Psoas muscle (tissue), 8 donors: ENCODE measurements at regions of chr10 and their contacts with region 1.

Region 1: DNA sequence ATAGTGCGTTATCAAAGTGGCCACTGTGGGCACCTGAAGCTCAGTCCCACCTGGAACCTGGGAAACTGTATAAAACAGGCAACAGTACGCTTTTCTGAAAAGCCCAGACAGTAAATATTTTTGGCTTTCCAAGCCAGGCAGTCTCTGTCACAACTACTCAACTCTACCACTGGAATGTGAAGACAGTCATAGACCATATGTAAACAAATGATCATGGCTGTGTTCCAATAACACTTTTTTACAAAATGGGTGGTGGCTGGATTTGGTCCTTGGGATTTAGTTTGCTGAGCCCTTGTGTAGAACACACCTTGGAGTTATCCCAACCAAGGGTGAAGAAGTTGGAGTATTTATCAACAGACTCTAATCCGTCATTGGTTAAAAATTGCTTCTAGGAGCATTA is 259.9 kb downstream of the SKIDA1 start:
- DNase-seq: no peak
- ATAC-seq: no peak
- H3K4me3 ChIP-seq: no peak overlapping the region
- H3K27ac ChIP-seq: no peak overlapping the region
- H3K4me1 ChIP-seq: no peaks in the 10 kb centered on the region
- H3K27me3 ChIP-seq: no peaks in the 10 kb centered on the region
- CTCF ChIP-seq: no peak

Region 2: DNA sequence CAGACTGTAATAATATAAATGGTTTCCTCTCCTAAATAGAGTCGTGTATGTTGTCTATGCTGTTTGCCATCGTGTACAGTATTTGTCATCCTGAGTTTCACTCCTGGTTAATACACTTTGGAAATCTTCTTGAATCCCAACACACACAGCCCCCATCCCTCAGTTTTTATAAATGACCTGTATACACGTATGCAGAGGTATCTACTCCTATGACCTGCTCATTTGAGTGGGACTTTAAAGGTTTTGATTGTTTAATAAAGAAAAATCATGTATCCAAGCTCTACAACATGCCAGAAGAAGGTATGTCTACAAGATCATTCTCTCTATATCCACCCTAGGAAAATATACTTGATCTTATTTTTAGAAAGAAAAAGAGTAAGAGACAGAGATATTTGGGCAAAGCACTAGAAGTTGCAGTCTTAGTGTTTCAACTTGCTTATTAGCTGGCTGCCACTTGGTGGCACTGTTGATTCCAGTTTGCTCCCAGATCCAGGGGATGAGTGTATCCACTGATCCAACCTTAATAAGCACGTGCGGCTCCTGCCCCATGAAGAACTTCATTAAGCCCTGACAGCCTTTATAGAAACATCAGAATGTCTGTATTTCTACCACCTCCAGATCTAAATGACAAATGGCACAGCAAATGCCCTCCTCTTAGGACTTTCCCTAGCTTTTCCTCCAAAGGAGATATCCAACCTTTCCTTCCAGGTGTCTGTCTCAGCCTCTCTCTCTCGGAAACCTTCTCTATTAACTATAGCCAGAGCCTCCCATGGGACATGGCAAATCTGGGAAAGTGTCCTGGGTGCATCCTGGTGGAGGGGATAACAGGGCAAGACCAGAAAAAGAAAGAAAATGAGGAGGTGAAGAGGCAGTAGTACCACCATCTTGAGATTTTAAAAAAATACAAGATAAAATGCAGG is 187.0 kb before region 1 on chr10:
- intact Hi-C with region 1: loop called in 1 of 2 experiments (anchors 5 kb)
- DNase-seq: peak; percentile 27 to 51
- ATAC-seq: peak; percentile 44 to 72 (median 60)
- H3K4me3 ChIP-seq: no peak overlapping the region
- H3K27ac ChIP-seq: no peak overlapping the region
- H3K4me1 ChIP-seq: no peaks in the 10 kb centered on the region
- H3K27me3 ChIP-seq: peaks cover 0 to 2% (median 0%) of the 10 kb centered on the region in 3 donors
- CTCF ChIP-seq: peak; percentile 74

Region 3: GRCh38 chr10:21173812-21174714 is 91.6 kb before region 1 on chr10:
- intact Hi-C with region 1: no loop called
- DNase-seq: peak; percentile 29 to 48
- ATAC-seq: peak in 3 of 4 donors; percentile 37 to 59 (median 41)
- H3K4me3 ChIP-seq: peak overlapping the region; percentile 61
- H3K27ac ChIP-seq: no peak overlapping the region
- H3K4me1 ChIP-seq: no peaks in the 10 kb centered on the region
- H3K27me3 ChIP-seq: peaks cover 0 to 50% (median 10%) of the 10 kb centered on the region in 3 donors
- CTCF ChIP-seq: no peak

Region 4: GRCh38 chr10:21315645-21316281 is 50.1 kb after region 1 on chr10:
- intact Hi-C with region 1: no loop called
- DNase-seq: peak; percentile 48 to 66
- ATAC-seq: peak in 3 of 4 donors; percentile 40 to 62 (median 57)
- H3K4me3 ChIP-seq: no peak overlapping the region
- H3K27ac ChIP-seq: no peak overlapping the region
- H3K4me1 ChIP-seq: peaks cover 8% of the 10 kb centered on the region
- H3K27me3 ChIP-seq: no peaks in the 10 kb centered on the region
- CTCF ChIP-seq: no peak